ENCODE measurements at regions of chr12 and their contacts with region 1.

Region 1: GRCh38 chr12:57751788-57752667 is at the start of gene CDK4:
- DNase-seq: peak; percentile 99
- ATAC-seq: peak; percentile 85
- H3K4me3 ChIP-seq: peak within 1 kb of the TSS; percentile 79
- H3K27ac ChIP-seq: peak within 1 kb of the TSS; percentile 94
- H3K4me1 ChIP-seq: peaks cover 27% of the 10 kb centered on the region
- H3K27me3 ChIP-seq: no peaks in the 10 kb centered on the region
- CTCF ChIP-seq: no peak
- EP300 ChIP-seq: peak in 1 of 2 experiments; percentile 77; a peak in 2 of 4 replicates
- POLR2A ChIP-seq: peak; percentile 94
- RAD21 ChIP-seq: no peak
- polyA plus RNA-seq, gene CDK4: 26.1 to 45.7 TPM

Region 2: DNA sequence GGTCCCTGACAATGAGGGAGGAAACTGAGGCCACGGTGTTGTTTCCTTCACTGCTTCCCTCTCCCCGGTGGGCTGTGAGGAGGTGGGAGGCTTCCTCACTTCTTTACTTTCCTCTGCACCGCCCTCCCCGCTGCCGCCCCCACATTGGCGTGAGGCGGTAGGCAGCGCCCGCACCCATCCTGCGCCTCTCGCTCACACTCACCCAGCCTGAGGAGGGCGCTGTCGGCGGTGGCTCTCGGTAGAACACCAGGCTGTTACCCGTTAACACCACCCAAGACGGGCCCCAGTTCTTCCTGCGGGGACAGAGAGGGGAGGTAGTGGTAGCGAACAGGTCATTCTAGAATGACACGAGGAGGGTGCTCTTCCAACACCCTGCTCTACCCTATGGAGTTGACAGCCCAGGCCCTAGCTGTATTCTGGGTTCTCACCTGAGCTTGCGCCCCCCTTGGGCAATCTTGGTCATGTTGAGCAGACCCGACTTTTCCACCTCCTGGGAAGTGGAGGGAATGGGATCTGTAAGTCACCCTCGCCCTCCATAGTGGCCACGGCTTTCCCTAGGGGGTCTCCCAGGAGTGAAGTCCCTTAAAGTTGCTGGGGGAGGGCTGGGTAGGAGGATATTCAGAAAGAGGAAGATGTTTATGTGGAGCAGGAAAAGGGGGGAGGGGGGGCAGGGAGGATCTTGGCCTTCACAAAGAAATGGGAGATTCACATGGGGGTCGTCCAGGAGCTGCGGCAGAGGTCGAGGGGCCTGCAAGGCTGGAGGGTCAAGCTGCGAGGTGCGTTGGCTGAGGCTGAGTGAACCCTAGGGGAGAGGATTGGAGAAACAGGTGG is 275.7 kb before region 1 on chr12:
- CTCF ChIA-PET with region 1: no interaction called
- POLR2A ChIA-PET with region 1: no interaction called
- RAD21 ChIA-PET with region 1: no interaction called
- SMC1A ChIA-PET with region 1: no interaction called
- in situ Hi-C with region 1: no loop called
- intact Hi-C with region 1: loop called (anchors 10 kb)
- DNase-seq: no peak
- ATAC-seq: peak; percentile 62
- H3K4me3 ChIP-seq: peak overlapping the region; percentile 92
- H3K27ac ChIP-seq: peak overlapping the region; percentile 85
- H3K4me1 ChIP-seq: peaks cover 34% of the 10 kb centered on the region
- H3K27me3 ChIP-seq: no peaks in the 10 kb centered on the region
- CTCF ChIP-seq: peak; percentile 48 to 81 (median 72)
- EP300 ChIP-seq: no peak
- POLR2A ChIP-seq: peak; percentile 73
- RAD21 ChIP-seq: peak; percentile 43

Region 3: GRCh38 chr12:57563358-57563757 is 188.7 kb before region 1 on chr12:
- CTCF ChIA-PET with region 1: no interaction called
- POLR2A ChIA-PET with region 1: no interaction called
- RAD21 ChIA-PET with region 1: no interaction called
- SMC1A ChIA-PET with region 1: no interaction called
- in situ Hi-C with region 1: no loop called
- intact Hi-C with region 1: no loop called
- DNase-seq: no peak
- ATAC-seq: no peak
- H3K4me3 ChIP-seq: no peak overlapping the region
- H3K27ac ChIP-seq: no peak overlapping the region
- H3K4me1 ChIP-seq: no peaks in the 10 kb centered on the region
- H3K27me3 ChIP-seq: no peaks in the 10 kb centered on the region
- CTCF ChIP-seq: no peak
- EP300 ChIP-seq: no peak
- POLR2A ChIP-seq: no peak
- RAD21 ChIP-seq: no peak

Region 4: DNA sequence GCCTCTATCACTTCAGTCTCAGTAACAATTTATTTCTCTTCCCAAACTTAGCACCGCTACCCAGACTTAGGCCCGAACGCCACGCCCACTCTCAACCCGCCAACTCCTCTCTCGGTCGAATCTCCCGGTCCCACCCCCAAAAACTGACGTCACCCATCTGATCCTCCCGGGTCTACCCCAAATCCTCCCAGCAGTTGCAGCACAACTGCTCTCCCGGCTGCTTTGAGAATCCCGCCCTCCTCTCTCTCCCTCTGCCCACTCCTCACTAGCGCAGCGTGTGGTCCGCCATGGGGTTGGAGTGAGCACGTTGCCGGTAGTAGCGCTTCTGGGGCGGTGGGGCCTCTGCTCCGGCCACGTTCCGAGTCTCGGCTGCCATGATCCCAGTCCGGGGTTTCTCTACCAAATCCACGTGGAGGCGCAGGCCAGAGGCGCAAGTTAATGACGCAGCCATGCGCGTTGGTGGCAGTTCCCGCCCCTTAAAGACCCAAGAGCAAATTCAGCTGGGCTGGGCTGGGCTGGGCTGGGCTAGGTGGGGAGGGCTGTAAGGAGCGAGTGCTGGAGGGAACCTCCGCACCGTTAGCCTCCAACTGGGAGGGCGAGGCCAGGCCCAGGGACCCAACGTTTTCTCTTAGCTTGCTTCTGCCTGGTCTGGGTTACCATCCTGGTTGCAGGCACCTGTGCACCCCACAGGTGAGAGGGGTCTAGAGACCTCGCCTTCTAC is 19.8 kb after region 1 on chr12 and contains the start of gene METTL1:
- CTCF ChIA-PET with region 1: interaction called, 62 read pairs
- POLR2A ChIA-PET with region 1: interaction called, 8 read pairs
- RAD21 ChIA-PET with region 1: interaction called, 6 read pairs
- SMC1A ChIA-PET with region 1: interaction called, 5 read pairs
- in situ Hi-C with region 1: no loop called
- intact Hi-C with region 1: loop called (anchors 1 kb)
- DNase-seq: peak; percentile 83
- ATAC-seq: peak; percentile 94
- H3K4me3 ChIP-seq: peak within 1 kb of the TSS; percentile 90
- H3K27ac ChIP-seq: peak within 1 kb of the TSS; percentile 82
- H3K4me1 ChIP-seq: peaks cover 3% of the 10 kb centered on the region
- H3K27me3 ChIP-seq: no peaks in the 10 kb centered on the region; a peak in 1 of 4 replicates
- CTCF ChIP-seq: no peak
- EP300 ChIP-seq: no peak
- POLR2A ChIP-seq: peak; percentile 97
- RAD21 ChIP-seq: no peak
- polyA plus RNA-seq, gene METTL1: 38.5 to 41.9 TPM

Region 5: DNA sequence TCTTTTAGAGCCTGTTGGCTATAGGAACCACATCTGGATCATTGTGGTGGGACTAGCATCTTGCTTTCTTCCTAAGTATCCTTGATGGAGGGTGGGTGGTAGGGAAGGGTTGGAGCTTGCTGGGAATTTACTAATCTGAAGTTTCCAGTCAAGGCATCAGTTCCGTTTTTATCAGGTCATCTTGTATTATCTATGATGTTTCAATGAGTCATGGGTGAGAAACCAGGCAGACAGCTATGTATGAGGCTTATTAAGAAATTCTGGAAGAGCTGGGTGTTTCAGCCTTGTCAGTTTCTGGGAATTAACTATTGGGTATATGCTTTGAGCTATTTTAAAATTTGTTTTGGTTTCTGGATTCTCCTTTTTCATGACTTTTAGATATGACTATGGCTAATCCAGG is 41.9 kb after region 1 on chr12:
- CTCF ChIA-PET with region 1: interaction called, 14 read pairs
- POLR2A ChIA-PET with region 1: no interaction called
- RAD21 ChIA-PET with region 1: no interaction called
- SMC1A ChIA-PET with region 1: no interaction called
- in situ Hi-C with region 1: no loop called
- intact Hi-C with region 1: no loop called
- DNase-seq: no peak
- ATAC-seq: no peak
- H3K4me3 ChIP-seq: no peak overlapping the region
- H3K27ac ChIP-seq: no peak overlapping the region
- H3K4me1 ChIP-seq: no peaks in the 10 kb centered on the region
- H3K27me3 ChIP-seq: no peaks in the 10 kb centered on the region
- CTCF ChIP-seq: no peak
- EP300 ChIP-seq: no peak
- POLR2A ChIP-seq: no peak
- RAD21 ChIP-seq: no peak

Region 6: GRCh38 chr12:57899010-57899662 is 147.1 kb after region 1 on chr12:
- CTCF ChIA-PET with region 1: interaction called, 28 read pairs
- POLR2A ChIA-PET with region 1: interaction called, 3 read pairs
- RAD21 ChIA-PET with region 1: interaction called, 3 read pairs
- SMC1A ChIA-PET with region 1: interaction called, 4 read pairs
- in situ Hi-C with region 1: no loop called
- intact Hi-C with region 1: loop called (anchors 2 kb)
- DNase-seq: peak; percentile 79
- ATAC-seq: peak; percentile 92
- H3K4me3 ChIP-seq: peak overlapping the region; percentile 56; the same call in 1 of the 2 replicates
- H3K27ac ChIP-seq: peak overlapping the region; percentile 87
- H3K4me1 ChIP-seq: peaks cover 56% of the 10 kb centered on the region
- H3K27me3 ChIP-seq: no peaks in the 10 kb centered on the region; a peak in 1 of 4 replicates
- CTCF ChIP-seq: no peak
- EP300 ChIP-seq: peak; percentile 27 to 47; a peak in 2 of 4 replicates
- POLR2A ChIP-seq: peak; percentile 66
- RAD21 ChIP-seq: no peak

Measured in GM12878 (cell line).